Activated CD4-positive, alpha-beta memory T cell treated with anti-CD3 and anti-CD28 coated beads, Interleukin-2, amount 10 ng/mL, durations not matched to agents 7 days and 5 days (primary cell): ENCODE measurements at regions of chr1 and their contacts with region 1.

Region 1: GRCh38 chr1:67339623-67340343 is 32.1 kb downstream of the IL12RB2 start:
- DNase-seq: no peak
- H3K4me3 Mint-ChIP-seq: peak overlapping the region; percentile 34
- H3K27ac Mint-ChIP-seq: peak overlapping the region; percentile 73
- H3K4me1 Mint-ChIP-seq: peaks cover 79% of the 10 kb centered on the region
- H3K27me3 Mint-ChIP-seq: no peaks in the 10 kb centered on the region

Region 2: GRCh38 chr1:67307251-67308060 is 32.3 kb before region 1 on chr1 and contains the start of gene IL12RB2:
- CTCF ChIA-PET with region 1: interaction called, 3 read pairs
- POLR2A ChIA-PET with region 1: interaction called, 114 read pairs
- DNase-seq: peak; percentile 73
- H3K4me3 Mint-ChIP-seq: peak within 1 kb of the TSS; percentile 97
- H3K27ac Mint-ChIP-seq: peak within 1 kb of the TSS; percentile 94
- H3K4me1 Mint-ChIP-seq: peaks cover 72% of the 10 kb centered on the region
- H3K27me3 Mint-ChIP-seq: no peaks in the 10 kb centered on the region
- total RNA-seq, gene IL12RB2: 75.5 to 76.0 TPM

Region 3: GRCh38 chr1:67314696-67315095 is 25.1 kb before region 1 on chr1:
- CTCF ChIA-PET with region 1: interaction called, 3 read pairs
- POLR2A ChIA-PET with region 1: interaction called, 114 read pairs
- DNase-seq: no peak
- H3K4me3 Mint-ChIP-seq: peak overlapping the region; percentile 47
- H3K27ac Mint-ChIP-seq: peak overlapping the region; percentile 87
- H3K4me1 Mint-ChIP-seq: peaks cover 53% of the 10 kb centered on the region
- H3K27me3 Mint-ChIP-seq: no peaks in the 10 kb centered on the region

Region 4: DNA sequence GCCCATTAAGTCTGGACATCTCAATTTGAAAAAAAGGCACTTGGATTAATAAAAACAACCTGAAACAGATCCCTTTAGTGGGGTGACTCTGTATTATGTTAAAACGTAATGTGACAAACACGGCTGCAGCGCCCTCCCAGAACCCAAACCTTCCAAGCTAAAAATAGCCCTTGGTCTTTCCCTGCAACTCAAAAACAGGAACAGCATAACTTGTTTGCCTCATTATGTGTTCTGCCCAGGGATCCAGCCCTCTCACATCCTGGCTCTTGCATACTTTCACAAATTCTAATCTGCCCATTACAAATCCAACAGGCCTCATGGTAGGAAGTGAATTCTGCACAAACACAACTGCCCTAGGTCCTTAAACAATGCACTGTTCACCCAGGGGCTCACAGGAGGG is 250.5 kb after region 1 on chr1:
- CTCF ChIA-PET with region 1: no interaction called
- POLR2A ChIA-PET with region 1: no interaction called
- DNase-seq: no peak
- H3K4me3 Mint-ChIP-seq: no peak overlapping the region
- H3K27ac Mint-ChIP-seq: no peak overlapping the region
- H3K4me1 Mint-ChIP-seq: no peaks in the 10 kb centered on the region
- H3K27me3 Mint-ChIP-seq: peaks cover 5% of the 10 kb centered on the region